ENCODE measurements at regions of chr15 and their contacts with region 1.

Region 1: DNA sequence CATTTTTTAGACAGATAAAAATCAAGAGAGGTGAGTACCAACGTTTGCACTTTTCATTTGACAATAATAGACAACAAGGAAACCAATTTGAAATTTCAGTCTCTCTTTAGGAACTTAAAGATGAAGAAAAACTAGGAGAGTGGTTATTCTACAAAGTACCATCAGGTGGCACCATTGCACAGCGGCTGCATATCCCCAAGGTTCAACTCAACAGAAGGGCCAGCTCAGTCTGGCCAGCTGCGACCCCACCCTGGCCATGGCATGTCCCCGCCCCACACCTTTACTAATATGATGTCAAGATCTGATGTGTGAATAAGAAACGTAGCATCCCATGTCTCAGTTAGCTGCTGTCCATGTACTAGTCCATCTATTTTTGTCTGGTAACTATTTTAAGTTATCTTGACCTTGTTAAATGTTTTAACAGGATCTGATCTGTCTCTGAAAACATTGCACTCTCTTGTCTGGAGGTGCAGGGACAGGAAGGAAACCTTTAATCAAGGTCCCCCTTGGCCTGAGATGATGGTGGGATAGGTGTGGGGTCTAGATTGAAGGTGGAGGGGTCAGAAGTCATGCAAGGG is 35.5 kb upstream of the CGNL1 start:
- DNase-seq: no peak
- ATAC-seq: peak in 1 of 2 donors; percentile 72
- H3K4me3 ChIP-seq: no peak overlapping the region
- H3K27ac ChIP-seq: no peak overlapping the region
- H3K4me1 ChIP-seq: no peaks in the 10 kb centered on the region
- H3K27me3 ChIP-seq: no peaks in the 10 kb centered on the region
- CTCF ChIP-seq: peak; percentile 61 to 88 (median 76)
- POLR2A ChIP-seq: no peak

Region 2: GRCh38 chr15:57356636-57357035 is 15.9 kb after region 1 on chr15:
- in situ Hi-C with region 1: no loop called
- intact Hi-C with region 1: no loop called
- DNase-seq: no peak
- ATAC-seq: no peak
- H3K4me3 ChIP-seq: no peak overlapping the region
- H3K27ac ChIP-seq: no peak overlapping the region
- H3K4me1 ChIP-seq: no peaks in the 10 kb centered on the region
- H3K27me3 ChIP-seq: no peaks in the 10 kb centered on the region
- CTCF ChIP-seq: no peak
- POLR2A ChIP-seq: no peak

Region 3: DNA sequence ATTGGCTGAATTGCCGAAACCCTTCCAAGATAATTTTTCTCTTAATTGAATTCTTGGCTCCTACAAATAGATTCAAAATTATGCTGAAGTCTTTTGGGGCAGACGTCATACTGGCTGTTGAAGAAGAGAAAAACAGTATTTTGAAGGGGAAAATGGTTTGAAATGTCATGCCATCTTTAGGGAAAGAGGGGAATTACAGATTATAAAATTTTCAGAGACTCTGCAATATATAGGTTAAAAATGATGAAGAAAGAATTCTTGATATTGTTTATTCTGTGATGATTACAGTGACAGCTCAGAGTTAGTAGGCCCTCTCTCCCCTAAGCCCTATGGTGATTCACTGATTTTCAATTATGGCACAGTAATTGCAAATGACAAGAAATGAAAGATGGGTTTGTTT is 121.6 kb after region 1 on chr15:
- in situ Hi-C with region 1: no loop called
- intact Hi-C with region 1: loop called (anchors 10 kb)
- DNase-seq: no peak
- ATAC-seq: no peak
- H3K4me3 ChIP-seq: no peak overlapping the region
- H3K27ac ChIP-seq: no peak overlapping the region
- H3K4me1 ChIP-seq: no peaks in the 10 kb centered on the region
- H3K27me3 ChIP-seq: no peaks in the 10 kb centered on the region
- CTCF ChIP-seq: no peak
- POLR2A ChIP-seq: no peak

Region 4: DNA sequence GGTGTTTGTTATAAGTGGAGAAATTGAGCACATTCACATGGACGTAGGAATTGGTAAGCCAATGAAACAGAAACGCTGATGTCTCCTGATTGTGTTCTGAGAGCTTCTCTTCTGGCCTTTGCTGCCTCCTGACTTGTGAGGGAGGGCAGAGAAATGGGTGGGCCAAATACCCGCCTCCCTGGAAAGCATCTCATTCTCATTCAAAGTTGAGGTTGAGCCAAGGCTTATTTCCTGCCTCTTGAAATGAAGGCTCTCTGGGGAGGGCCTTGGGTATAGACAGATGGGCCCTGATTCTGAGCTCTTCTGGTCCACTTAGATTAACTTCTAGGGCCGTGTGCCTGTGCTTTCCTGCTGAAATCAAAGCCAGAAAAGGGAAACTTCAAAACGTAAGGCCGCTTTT is 193.5 kb after region 1 on chr15:
- in situ Hi-C with region 1: loop called (anchors 5 kb)
- intact Hi-C with region 1: no loop called
- DNase-seq: no peak
- ATAC-seq: peak; percentile 33 to 52
- H3K4me3 ChIP-seq: no peak overlapping the region
- H3K27ac ChIP-seq: peak overlapping the region in 1 of 4 donors; percentile 13
- H3K4me1 ChIP-seq: no peaks in the 10 kb centered on the region
- H3K27me3 ChIP-seq: no peaks in the 10 kb centered on the region
- CTCF ChIP-seq: no peak
- POLR2A ChIP-seq: no peak

Region 5: GRCh38 chr15:57541805-57542504 is 201.2 kb after region 1 on chr15:
- in situ Hi-C with region 1: no loop called
- intact Hi-C with region 1: loop called (anchors 5 kb)
- DNase-seq: peak in 1 of 2 donors; percentile 53
- ATAC-seq: peak; percentile 34 to 64
- H3K4me3 ChIP-seq: no peak overlapping the region
- H3K27ac ChIP-seq: no peak overlapping the region
- H3K4me1 ChIP-seq: no peaks in the 10 kb centered on the region
- H3K27me3 ChIP-seq: no peaks in the 10 kb centered on the region
- CTCF ChIP-seq: peak; percentile 31 to 76 (median 64)
- POLR2A ChIP-seq: no peak